ENCODE measurements at regions of chr2 and their contacts with region 1.

Region 1: GRCh38 chr2:196376984-196377877 is 205.9 kb upstream of the STK17B start:
- DNase-seq: peak; percentile 21
- CTCF ChIP-seq: no peak

Region 2: DNA sequence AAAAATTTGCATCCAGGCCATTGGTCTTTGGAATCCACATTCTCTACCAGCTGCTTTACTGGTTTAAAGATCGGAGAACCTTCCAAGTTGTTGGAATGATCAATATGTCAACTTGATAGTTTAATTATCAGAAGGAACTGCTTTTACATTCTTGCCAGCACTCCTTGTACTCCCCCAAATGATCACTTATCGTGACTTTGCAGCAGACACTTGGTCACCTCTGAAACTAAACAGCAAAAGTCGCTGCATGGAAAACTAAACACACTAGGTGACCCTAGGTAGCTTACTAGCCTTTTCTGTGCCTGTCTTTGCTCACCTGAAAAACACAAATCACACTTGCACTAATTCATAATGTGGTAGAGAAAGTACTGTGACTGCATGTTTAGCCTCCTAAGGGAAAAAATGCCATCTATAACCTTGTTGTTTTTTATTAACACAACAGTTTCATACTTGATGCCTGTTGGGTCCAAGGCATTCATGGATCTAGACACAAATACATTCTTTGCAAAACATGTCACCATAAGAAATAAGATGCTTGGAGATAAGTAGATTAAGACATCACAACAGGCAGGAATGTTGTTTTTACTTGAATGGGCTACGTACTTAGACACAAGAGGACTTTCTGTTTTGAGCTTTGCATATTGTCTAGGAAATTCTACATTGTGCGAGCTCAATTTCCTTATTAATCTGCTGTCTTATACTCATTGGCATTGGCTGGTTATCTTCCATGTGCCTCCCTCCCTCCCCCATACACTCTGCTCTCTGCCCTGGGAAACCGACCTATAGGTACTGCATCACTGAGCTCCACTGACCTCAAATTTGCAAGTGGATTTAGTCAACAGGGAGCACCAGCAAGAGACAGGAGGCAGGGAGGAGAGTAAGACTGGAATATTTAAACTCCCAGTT is 13.3 kb after region 1 on chr2:
- CTCF ChIA-PET with region 1: interaction called, 17 read pairs
- POLR2A ChIA-PET with region 1: no interaction called
- DNase-seq: no peak
- CTCF ChIP-seq: no peak

Measured in GM10248 (cell line).